Head of caudate nucleus (tissue), 42 donors: ENCODE measurements at regions of chr16 and their contacts with region 1.

Region 1: DNA sequence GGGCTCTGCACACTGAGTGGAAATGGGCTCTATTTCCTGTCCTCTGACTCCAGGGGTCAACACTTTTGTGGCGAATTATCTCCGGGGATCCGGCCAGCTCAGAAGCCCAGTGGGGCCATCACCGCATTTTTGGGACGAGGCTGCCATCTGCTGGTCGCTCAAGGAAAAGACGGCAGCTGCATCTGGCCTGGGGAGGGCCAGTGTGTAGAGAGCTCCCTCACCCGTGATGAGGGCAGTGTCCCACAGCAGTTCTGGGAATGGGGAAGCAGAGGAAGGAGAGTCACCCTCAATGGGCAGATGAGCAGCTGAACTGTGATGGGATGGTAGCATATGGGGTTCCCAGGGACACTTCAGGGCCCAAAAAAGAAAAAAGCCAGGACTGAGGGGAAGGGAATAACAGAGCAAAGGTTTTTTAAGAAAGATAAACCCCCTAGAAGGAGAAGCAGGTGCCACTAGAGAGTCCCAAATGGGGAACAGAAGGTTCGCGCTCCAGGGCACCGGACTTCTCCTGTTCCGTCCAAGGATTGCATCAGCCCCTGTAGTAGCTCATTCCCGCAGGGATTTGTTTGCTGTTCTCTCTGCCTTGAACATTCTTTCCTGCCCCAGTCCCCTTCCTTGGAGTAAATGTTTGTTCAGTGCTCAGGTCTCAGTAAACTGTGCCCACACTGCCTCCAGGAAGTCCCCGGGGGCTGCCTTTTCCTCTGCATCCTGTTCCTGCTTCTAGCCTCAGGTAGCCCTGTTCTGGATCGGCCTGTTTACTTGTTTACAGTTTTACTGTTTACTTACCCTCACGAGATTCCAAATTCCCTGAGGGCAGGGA is 9.3 kb upstream of the ABCC12 start:
- DNase-seq: peak; percentile 60 to 92 (median 83)

Region 2: DNA sequence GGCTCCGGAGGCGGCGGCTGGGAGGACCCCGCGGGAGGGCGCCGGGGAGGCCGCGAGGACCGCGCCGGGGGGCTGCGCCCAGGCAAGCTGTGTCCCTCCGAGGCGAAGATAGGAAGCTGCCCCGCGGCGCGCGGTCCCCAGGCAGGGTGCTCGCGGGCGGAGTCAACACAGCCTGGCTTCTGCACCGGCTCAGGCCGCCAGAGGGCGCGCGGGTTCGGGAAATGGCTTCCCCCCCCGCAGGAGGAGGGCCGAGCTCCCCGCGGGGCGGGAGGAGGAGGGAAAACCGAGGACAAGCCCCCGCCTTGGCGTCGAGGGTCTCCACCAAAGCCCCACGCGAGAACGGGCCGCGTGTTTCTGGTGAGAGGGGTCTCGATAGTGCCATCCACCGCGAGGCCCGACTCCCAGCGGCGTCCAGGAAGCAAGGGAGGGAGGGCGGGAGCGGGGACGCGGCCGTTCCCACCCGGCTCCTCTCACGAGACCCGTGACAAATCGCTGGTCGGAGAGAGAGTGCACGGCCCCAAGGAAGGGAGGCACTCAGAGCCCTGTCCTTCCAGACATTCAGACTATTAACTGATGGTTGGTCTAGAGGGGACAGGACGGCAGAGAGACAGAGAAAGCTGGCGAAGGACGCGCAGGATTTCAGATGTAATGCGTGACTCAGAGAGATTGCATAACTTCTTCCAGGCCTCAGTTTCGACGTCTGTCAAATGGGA is 1127.2 kb before region 1 on chr16:
- intact Hi-C with region 1: loop called (anchors 5 kb)
- DNase-seq: peak; percentile 74 to 96 (median 91)

Region 3: DNA sequence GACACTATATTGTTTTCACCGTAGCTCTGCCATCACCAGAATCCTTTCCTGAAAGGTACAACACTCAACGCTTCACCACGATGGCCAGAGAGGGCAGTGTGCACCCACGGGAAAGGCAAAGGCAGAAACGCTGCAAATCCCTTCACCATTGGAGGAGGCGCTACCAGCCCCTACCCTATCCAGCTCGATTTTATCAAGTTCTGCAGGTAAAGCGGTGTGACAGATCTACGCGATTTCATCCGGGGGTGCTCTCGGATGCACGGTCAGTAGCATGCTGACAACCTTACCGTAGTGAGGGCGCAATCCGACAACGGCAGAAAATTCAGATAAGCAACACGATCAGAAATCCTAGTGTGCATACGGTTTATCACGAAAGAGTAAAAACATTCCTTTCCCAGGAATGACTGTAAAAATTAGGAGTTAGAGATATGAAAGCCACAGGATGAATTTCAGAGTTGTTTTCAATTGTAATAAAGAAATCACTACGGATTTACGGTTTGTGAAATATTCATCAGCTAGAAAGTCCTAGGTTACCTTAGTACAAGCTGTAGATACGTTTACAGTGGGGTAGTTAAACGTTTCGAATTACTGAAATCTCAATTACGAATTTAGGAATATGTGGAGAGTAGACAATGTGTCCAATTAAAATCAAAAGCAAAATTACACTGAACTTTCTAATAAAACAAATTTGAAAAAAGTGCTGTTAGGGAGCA is 1023.2 kb before region 1 on chr16:
- intact Hi-C with region 1: loop called (anchors 5 kb)
- DNase-seq: peak; percentile 75 to 97 (median 90)